ENCODE measurements at regions of chr14 and their contacts with region 1.

Region 1: DNA sequence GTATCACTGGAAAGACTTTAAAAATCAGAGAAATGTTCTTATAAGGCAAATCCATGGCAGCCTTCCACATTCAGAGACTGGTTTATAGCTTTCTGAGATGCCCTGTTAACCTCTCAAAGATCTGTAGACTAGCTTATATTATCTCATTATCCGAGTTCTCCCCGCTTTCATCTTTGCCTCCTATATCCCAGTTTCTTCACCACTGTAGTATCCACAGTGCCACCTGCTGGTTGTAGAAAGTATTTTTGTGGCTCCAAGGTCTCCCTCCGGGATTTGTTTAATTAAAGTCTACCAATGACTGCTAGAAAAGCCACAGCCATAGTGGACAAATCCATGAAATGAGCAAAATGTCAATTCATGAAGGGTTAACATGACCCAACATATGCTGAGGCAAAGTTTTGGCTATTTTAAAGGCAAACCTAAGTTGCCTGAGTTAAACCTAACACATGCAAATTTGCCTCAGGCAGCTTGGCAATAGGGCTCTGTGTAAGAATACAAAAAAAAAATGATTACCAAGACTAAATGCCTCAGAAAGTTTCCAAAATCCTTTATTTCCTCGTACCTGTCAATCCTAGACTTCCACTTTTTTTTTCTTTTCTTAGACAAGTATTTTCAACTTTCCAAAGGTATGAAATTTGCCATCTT is 218.8 kb upstream of the BMP4 start:
- DNase-seq: peak; percentile 65
- H3K4me3 ChIP-seq: no peak overlapping the region
- H3K27ac ChIP-seq: peak overlapping the region; percentile 8
- H3K4me1 ChIP-seq: peaks cover 20% of the 10 kb centered on the region
- H3K27me3 ChIP-seq: no peaks in the 10 kb centered on the region
- CTCF ChIP-seq: peak; percentile 71 to 82

Region 2: GRCh38 chr14:53432378-53432802 is 743.0 kb before region 1 on chr14:
- CTCF ChIA-PET with region 1: no interaction called
- dilution Hi-C with region 1: no loop called
- in situ Hi-C with region 1: no loop called
- intact Hi-C with region 1: loop called (anchors 1 kb)
- DNase-seq: peak; percentile 37
- H3K4me3 ChIP-seq: no peak overlapping the region
- H3K27ac ChIP-seq: no peak overlapping the region
- H3K4me1 ChIP-seq: no peaks in the 10 kb centered on the region
- H3K27me3 ChIP-seq: no peaks in the 10 kb centered on the region
- CTCF ChIP-seq: peak; percentile 81 to 85

Region 3: GRCh38 chr14:53929871-53930715 is 245.3 kb before region 1 on chr14:
- CTCF ChIA-PET with region 1: no interaction called
- dilution Hi-C with region 1: no loop called
- in situ Hi-C with region 1: no loop called
- intact Hi-C with region 1: loop called (anchors 1 kb)
- DNase-seq: peak; percentile 27
- H3K4me3 ChIP-seq: no peak overlapping the region
- H3K27ac ChIP-seq: no peak overlapping the region
- H3K4me1 ChIP-seq: peaks cover 11% of the 10 kb centered on the region
- H3K27me3 ChIP-seq: no peaks in the 10 kb centered on the region
- CTCF ChIP-seq: peak; percentile 63 to 68

Region 4: DNA sequence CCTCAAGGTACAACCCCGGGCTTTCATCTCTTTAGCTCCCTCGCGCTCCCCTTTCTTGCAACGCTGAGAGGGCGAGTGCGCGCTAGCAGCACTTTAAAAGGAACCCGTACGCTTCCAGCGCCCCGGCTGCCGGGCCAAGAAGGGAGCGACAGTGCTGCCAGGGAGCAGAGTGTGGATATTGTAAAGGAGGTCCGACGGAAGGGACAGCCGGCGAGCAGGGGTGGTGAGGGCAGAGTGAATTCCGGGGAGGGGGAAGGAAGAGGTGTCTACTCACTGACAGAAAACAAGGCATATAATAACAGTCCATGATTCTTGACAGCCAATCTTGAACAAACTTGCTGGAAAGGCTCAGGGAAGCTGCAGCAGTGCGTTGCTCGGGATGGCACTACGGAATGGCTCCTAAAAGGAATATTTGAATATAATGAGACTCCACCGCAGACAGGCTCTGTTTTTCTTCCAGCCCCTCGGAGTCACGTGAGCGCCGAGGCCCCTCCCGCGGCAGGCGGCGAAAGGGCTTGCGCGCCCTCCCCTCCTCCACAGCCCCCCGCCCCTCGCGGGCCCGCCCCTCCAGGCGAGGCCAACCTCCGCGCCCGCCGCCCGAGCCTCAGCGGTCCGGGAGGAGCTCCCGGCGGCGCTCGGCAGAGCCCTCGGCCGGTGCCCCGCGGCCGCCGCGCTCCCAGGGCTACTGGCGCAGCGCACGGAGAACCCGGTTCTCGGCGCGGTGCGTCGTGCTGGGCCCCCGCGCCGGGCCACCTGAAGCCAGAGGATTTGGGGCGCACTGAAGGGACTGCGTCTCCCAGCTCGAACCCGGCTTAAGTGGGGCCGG is 222.2 kb before region 1 on chr14:
- CTCF ChIA-PET with region 1: no interaction called
- dilution Hi-C with region 1: no loop called
- in situ Hi-C with region 1: no loop called
- intact Hi-C with region 1: loop called (anchors 10 kb)
- DNase-seq: peak; percentile 59
- H3K4me3 ChIP-seq: peak overlapping the region; percentile 48 to 67 (median 59)
- H3K27ac ChIP-seq: peak overlapping the region; percentile 56
- H3K4me1 ChIP-seq: peaks cover 17% of the 10 kb centered on the region
- H3K27me3 ChIP-seq: no peaks in the 10 kb centered on the region
- CTCF ChIP-seq: no peak

Region 5: GRCh38 chr14:54025661-54026060 is 149.8 kb before region 1 on chr14:
- CTCF ChIA-PET with region 1: no interaction called
- dilution Hi-C with region 1: no loop called
- in situ Hi-C with region 1: loop called in 1 of 2 experiments (anchors 10 kb)
- intact Hi-C with region 1: loop called (anchors 1 kb)
- DNase-seq: peak; percentile 41
- H3K4me3 ChIP-seq: no peak overlapping the region
- H3K27ac ChIP-seq: no peak overlapping the region
- H3K4me1 ChIP-seq: no peaks in the 10 kb centered on the region
- H3K27me3 ChIP-seq: no peaks in the 10 kb centered on the region
- CTCF ChIP-seq: peak; percentile 60 to 62

Region 6: DNA sequence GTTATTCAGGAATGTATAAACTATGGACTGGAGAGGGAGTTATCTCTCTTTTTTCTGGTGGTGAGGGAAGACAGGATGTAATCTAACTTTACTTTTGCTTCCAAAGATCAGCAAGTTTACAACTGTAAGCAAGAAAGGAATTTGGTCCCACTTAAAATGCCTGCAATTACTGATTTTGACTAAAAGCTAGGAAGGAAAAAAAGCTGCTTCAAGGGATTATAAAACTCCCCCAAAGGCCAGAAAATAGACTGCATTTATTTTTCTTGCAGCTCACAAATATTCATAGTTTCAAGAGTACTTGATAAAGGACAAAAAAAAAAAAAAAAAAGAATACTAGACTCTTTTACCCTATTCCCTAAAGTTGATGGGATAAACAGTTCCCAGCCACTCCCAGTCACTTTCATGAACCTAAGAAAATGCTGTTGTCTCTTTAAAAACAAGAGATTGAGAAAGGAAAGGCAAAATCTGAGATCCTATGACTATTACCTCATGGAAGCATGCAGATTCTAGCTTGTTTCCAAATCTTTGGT is 90.1 kb before region 1 on chr14:
- CTCF ChIA-PET with region 1: no interaction called
- dilution Hi-C with region 1: no loop called
- in situ Hi-C with region 1: no loop called
- intact Hi-C with region 1: loop called (anchors 2 kb)
- DNase-seq: no peak
- H3K4me3 ChIP-seq: no peak overlapping the region
- H3K27ac ChIP-seq: no peak overlapping the region
- H3K4me1 ChIP-seq: no peaks in the 10 kb centered on the region
- H3K27me3 ChIP-seq: no peaks in the 10 kb centered on the region
- CTCF ChIP-seq: no peak

Region 7: DNA sequence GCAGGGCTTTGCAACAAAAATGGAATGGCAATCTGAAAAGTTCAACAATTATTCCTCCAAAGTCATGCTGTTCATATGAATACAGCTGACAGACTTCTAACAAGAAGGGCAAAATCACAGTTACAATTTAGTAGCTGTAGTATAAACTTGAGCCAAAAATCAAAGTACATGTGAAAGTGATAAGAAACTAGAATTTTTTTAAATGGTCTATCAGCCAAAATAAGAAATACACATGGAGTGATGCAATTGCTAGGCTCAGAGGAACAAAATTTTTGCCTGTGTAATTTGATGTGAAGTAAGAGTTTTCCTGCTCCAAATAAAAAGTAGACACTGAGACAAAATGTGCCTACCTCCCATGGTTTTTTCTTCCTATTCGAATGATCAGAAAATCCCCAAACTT is 53.7 kb after region 1 on chr14:
- CTCF ChIA-PET with region 1: no interaction called
- dilution Hi-C with region 1: no loop called
- in situ Hi-C with region 1: no loop called
- intact Hi-C with region 1: no loop called
- DNase-seq: no peak
- H3K4me3 ChIP-seq: no peak overlapping the region
- H3K27ac ChIP-seq: no peak overlapping the region
- H3K4me1 ChIP-seq: no peaks in the 10 kb centered on the region
- H3K27me3 ChIP-seq: no peaks in the 10 kb centered on the region
- CTCF ChIP-seq: no peak

Region 8: DNA sequence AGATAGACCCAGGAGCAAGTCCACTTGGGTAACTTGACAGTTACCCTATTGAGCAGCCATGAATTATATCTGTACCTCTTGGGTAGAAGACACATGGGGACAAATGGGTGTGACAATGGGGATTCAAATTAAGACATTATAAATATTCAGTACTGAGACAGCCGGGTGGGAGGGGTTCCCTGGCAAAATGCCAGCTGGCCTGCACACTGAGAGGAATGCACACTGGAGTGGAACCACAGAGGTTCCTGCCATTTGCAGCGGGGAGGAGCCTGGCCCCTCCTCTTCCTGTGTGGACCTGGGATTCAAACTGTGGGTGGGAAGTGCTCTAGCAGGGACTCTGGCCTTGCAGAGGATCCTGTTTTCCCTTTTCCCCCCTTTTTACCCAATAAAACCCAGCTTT is 102.7 kb after region 1 on chr14:
- CTCF ChIA-PET with region 1: no interaction called
- dilution Hi-C with region 1: no loop called
- in situ Hi-C with region 1: no loop called
- intact Hi-C with region 1: no loop called
- DNase-seq: no peak
- H3K4me3 ChIP-seq: no peak overlapping the region
- H3K27ac ChIP-seq: no peak overlapping the region
- H3K4me1 ChIP-seq: no peaks in the 10 kb centered on the region
- H3K27me3 ChIP-seq: no peaks in the 10 kb centered on the region
- CTCF ChIP-seq: no peak

Region 9: DNA sequence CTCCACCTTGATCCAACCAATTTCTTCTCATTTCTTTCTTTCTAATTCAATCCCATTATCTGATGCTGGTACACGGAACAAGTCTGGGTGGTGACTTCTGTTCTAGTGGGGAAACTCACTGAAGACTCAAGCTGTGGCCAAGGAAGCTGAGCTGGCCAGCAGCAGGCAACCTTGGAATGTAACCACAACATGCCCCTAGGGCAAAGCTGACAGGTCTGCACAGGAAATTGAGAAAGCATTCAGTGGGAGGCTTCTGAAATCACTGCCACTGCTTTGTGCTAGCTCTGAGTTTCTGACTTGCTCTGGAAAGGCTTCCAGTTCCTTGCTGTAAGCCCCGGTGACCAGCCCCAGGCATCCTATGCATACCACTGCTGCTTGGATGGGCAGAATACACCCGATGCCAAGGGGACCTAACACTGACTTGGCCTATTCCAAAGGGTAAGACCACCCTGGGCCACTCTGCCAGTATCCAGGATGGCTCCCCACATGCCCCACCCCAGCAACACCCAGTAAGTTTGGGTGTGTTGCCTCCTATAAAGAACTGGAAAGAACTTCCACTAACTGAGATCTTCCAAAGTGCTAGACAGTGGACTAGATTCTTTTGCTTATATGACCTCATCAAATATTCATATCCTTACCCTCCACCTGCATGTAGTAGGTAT is 136.9 kb after region 1 on chr14:
- CTCF ChIA-PET with region 1: no interaction called
- dilution Hi-C with region 1: no loop called
- in situ Hi-C with region 1: loop called in 1 of 2 experiments (anchors 25 kb)
- intact Hi-C with region 1: no loop called
- DNase-seq: peak; percentile 99
- H3K4me3 ChIP-seq: peak overlapping the region in 1 of 3 experiments; percentile 14
- H3K27ac ChIP-seq: peak overlapping the region; percentile 78
- H3K4me1 ChIP-seq: peaks cover 34% of the 10 kb centered on the region
- H3K27me3 ChIP-seq: no peaks in the 10 kb centered on the region
- CTCF ChIP-seq: no peak